ENCODE measurements at regions of chr1 and their contacts with region 1.

Region 1: DNA sequence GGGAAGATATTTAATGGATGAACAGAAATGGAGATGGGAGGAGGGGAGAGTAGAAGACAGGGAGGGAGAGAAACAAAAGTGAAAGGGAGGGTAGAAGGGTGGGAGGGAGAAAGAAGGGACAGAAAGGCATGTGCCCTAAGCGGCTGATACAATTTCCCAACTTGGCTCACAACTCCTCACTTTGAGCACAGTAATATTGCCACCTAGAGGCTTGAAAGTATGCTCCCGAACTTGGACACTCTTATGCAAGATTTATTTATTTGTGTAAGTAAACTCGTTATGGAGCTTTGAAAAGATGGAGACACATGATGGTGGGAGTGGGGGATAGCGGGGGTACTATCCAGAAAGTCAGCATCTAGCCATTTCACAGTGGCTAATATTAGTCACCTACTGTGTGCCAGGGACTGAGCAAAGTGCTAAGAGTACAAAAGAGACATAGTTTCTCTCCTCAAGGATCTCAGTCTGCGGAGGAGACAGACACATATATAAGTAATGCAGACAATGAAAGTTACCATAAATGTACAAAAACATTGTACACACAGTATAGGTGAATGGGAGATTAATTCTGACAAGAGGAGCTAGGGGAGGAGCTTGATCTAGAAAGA is 189.7 kb downstream of the SEC16B start:
- DNase-seq: peak; percentile 96
- H3K4me3 ChIP-seq: no peak overlapping the region
- H3K27ac ChIP-seq: peak overlapping the region; percentile 81
- H3K4me1 ChIP-seq: peaks cover 34% of the 10 kb centered on the region
- H3K27me3 ChIP-seq: no peaks in the 10 kb centered on the region
- CTCF ChIP-seq: peak; percentile 84

Region 2: DNA sequence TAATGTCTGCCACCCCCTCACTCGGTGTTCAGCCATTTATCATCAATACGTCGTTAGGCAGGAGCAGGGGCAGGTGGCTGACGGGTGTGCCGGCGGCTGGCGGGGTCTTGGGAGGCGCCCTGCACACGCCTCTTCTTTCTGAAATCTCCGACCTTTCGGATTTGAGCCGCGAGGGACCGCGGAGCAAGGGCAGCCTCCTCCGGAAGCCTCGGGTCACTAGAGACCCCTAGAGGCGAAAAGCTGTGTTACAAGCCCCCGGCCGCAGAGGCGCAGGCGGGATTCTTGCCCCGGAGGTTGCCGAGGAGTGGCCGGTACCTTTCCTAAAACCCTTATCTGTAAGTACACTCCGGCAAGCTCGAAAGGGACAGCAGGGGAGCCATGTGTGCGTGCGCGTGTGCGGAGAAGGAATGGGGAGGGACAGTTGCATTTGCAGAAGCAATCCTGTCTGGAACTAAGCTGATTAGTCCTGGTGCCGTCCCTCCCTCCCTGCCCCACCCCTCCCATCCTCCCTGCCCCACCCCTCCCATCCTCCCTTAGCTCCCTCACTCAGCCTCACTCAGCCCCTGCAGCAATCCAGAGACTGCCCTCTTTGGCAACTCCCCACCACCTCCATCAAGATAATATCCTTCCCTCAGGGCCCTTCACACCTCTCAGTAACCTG is 598.4 kb before region 1 on chr1:
- CTCF ChIA-PET with region 1: no interaction called
- POLR2A ChIA-PET with region 1: no interaction called
- intact Hi-C with region 1: loop called (anchors 2 kb)
- DNase-seq: peak; percentile 81
- H3K4me3 ChIP-seq: peak overlapping the region; percentile 38
- H3K27ac ChIP-seq: no peak overlapping the region
- H3K4me1 ChIP-seq: peaks cover 9% of the 10 kb centered on the region
- H3K27me3 ChIP-seq: peaks cover 6% of the 10 kb centered on the region
- CTCF ChIP-seq: peak; percentile 89

Region 3: GRCh38 chr1:177355595-177355994 is 424.6 kb before region 1 on chr1:
- CTCF ChIA-PET with region 1: interaction called, 3 read pairs
- POLR2A ChIA-PET with region 1: no interaction called
- intact Hi-C with region 1: loop called (anchors 5 kb)
- DNase-seq: peak; percentile 41
- H3K4me3 ChIP-seq: no peak overlapping the region
- H3K27ac ChIP-seq: no peak overlapping the region
- H3K4me1 ChIP-seq: peaks cover 10% of the 10 kb centered on the region
- H3K27me3 ChIP-seq: no peaks in the 10 kb centered on the region
- CTCF ChIP-seq: peak; percentile 65

Region 4: DNA sequence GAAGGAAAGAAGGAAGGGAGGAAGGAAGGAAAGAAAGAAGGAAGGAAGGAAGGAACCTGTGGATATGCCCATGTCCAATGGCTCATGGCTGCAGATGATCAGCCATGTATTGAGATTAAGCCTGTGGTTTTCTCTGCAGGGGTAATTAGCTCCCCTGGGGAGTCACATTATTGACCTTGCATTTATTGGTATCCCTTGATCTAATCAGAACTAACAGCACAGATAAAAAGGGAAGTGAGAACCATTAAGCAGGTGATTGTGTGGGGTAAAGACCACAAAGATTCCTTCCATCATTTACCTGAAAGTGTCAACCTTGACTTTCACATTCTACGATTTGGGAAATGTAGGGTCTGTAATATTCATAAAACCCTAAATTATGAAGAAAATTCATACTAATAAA is 218.8 kb before region 1 on chr1:
- CTCF ChIA-PET with region 1: no interaction called
- POLR2A ChIA-PET with region 1: no interaction called
- intact Hi-C with region 1: loop called (anchors 5 kb)
- DNase-seq: peak; percentile 73
- H3K4me3 ChIP-seq: no peak overlapping the region
- H3K27ac ChIP-seq: no peak overlapping the region
- H3K4me1 ChIP-seq: no peaks in the 10 kb centered on the region
- H3K27me3 ChIP-seq: no peaks in the 10 kb centered on the region
- CTCF ChIP-seq: no peak

Region 5: DNA sequence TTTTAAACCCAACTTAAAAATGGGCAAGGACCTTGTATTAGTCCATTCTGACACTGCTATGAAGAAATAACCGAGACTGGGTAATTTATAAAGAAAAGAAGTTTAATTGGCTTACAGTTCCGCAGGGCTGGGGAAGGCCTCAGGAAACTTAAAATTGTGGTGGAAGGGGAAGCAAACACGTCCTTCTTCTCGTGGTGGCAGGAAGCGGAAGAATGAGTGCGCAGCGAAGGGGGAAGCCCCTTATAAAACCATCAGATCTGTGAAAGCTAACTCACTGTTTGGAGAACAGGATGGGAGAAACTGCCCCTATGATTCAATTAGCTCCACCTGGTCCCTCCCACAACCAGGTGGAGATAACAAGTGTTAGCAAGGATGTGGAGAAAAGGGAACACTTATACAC is 48.0 kb before region 1 on chr1:
- CTCF ChIA-PET with region 1: no interaction called
- POLR2A ChIA-PET with region 1: no interaction called
- intact Hi-C with region 1: loop called (anchors 1 kb)
- DNase-seq: peak; percentile 83
- H3K4me3 ChIP-seq: peak overlapping the region; percentile 50
- H3K27ac ChIP-seq: peak overlapping the region; percentile 97
- H3K4me1 ChIP-seq: peaks cover 49% of the 10 kb centered on the region
- H3K27me3 ChIP-seq: no peaks in the 10 kb centered on the region
- CTCF ChIP-seq: no peak

Region 6: GRCh38 chr1:177913762-177914540 is 133.8 kb after region 1 on chr1:
- CTCF ChIA-PET with region 1: no interaction called
- POLR2A ChIA-PET with region 1: no interaction called
- intact Hi-C with region 1: loop called (anchors 2 kb)
- DNase-seq: peak; percentile 84
- H3K4me3 ChIP-seq: no peak overlapping the region
- H3K27ac ChIP-seq: no peak overlapping the region
- H3K4me1 ChIP-seq: peaks cover 6% of the 10 kb centered on the region
- H3K27me3 ChIP-seq: no peaks in the 10 kb centered on the region
- CTCF ChIP-seq: peak; percentile 82

Measured in A673 (cell line).